ENCODE measurements at regions of chr9 and their contacts with region 1.

Region 1: DNA sequence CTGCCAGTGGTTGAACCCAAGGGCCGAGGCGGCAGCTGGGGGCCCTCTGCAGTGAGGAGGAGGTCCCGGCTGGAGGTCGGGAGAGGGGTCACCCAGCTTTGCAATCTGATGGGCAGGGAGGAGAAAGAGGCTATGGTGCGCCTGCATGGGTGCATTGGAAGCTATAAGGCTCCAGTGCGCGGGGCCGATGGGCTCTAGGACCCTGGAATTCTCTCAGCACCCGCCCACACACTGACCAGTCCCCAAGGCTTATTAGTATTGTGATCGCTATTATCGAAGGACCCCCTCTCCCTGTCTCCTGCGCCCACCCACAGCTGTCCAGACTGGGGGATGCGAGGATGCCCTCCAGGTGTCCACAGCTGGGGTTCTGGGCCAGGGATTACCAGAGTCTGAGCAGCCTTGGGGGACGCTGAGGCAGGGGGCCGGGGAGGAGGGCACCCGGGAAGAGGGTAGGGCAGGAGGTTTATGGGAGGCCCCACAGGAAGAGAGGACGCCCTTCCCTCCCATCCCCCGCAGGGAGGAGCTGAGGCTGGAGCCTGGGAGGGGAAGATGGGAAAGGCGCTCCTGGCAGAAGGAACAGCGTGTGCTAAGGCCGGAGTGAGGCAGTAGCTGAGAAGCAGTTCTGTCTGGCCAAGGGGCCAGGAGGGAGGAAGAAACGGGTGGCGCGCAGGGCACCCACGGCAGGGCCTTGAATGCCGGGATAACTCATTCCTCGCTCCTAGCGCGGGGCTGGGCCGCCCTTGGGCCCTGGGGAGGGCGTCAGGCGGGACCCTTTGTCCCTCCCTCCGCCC is 24.2 kb downstream of the C9orf50 start:
- DNase-seq: no peak
- ATAC-seq: no peak
- H3K4me3 Mint-ChIP-seq: peak overlapping the region; percentile 23
- H3K27ac Mint-ChIP-seq: peak overlapping the region; percentile 67
- H3K4me1 Mint-ChIP-seq: peaks cover 43% of the 10 kb centered on the region
- H3K27me3 Mint-ChIP-seq: peaks cover 11% of the 10 kb centered on the region

Region 2: DNA sequence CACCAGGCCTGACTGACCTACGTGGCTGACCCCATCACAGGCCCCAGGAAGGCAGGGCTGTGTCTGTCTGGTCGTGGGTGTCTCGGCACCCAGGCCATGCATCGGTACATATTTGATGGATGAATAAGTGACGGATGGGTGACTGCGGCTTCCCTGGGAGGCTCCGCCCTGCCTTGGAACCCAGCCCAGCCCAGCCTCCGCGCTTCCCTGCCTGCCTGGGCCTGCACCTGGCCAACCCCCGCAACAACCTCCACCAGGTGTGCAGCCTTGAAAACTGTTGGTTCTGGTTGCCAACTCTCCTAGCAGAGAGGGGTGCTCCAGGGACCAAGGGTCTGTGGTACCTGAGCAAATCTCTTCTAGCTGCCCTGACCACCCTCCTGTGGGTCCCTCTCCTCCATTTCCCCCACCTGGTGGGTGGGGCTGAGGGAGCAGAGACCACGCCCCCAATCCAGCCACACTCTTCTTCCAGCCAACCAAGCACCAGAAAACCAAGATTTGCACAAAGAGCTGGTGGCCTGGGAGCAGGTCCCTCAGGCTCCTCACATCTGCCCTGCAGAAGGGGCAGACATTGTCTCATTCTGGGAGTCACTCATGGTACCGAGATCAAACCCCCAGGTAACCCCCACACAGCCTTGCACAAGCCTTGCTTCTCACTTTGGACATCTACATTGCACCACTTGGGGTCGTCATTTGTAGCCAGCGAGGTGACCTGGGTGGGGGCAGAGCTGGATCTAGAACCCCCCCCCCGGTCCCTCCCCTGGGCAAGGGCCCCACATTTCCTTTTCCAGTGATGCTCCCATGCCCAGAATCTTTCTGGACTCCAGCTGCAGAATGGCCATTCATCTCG is 318.1 kb before region 1 on chr9:
- CTCF ChIA-PET with region 1: no interaction called
- POLR2A ChIA-PET with region 1: no interaction called
- DNase-seq: no peak
- ATAC-seq: no peak
- H3K4me3 Mint-ChIP-seq: no peak overlapping the region
- H3K27ac Mint-ChIP-seq: no peak overlapping the region
- H3K4me1 Mint-ChIP-seq: peaks cover 6% of the 10 kb centered on the region
- H3K27me3 Mint-ChIP-seq: peaks cover 20% of the 10 kb centered on the region

Region 3: DNA sequence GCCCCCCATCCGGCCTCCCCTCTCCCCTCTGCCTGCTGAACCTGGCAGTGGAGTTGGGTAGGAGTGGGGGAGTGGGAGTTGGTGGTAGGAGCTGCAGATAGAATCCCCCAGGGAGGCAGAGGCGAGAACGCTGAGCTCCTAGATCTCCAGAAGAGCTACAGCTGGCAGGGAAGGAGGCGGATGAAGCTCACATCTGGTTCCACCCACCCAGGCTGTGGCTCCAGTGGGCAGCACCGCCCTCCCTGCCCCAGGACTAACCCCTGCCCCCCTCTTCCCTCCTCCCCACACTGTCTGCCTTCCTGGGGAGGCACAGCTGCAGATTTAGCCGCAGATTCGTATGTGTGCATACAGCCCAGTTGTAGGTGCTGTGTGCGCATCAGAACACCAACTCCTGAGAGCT is 10.1 kb before region 1 on chr9:
- CTCF ChIA-PET with region 1: interaction called, 10 read pairs
- POLR2A ChIA-PET with region 1: no interaction called
- DNase-seq: peak; percentile 72
- ATAC-seq: peak; percentile 52
- H3K4me3 Mint-ChIP-seq: peak overlapping the region; percentile 24
- H3K27ac Mint-ChIP-seq: peak overlapping the region; percentile 93
- H3K4me1 Mint-ChIP-seq: peaks cover 67% of the 10 kb centered on the region
- H3K27me3 Mint-ChIP-seq: peaks cover 17% of the 10 kb centered on the region

Measured in activated CD8-positive, alpha-beta T cell treated with anti-CD3 and anti-CD28 coated beads, Interleukin-2, amount 10 ng/mL, durations not matched to agents 7 days and 5 days (primary cell).